ENCODE measurements at regions of chr12 and their contacts with region 1.

Region 1: DNA sequence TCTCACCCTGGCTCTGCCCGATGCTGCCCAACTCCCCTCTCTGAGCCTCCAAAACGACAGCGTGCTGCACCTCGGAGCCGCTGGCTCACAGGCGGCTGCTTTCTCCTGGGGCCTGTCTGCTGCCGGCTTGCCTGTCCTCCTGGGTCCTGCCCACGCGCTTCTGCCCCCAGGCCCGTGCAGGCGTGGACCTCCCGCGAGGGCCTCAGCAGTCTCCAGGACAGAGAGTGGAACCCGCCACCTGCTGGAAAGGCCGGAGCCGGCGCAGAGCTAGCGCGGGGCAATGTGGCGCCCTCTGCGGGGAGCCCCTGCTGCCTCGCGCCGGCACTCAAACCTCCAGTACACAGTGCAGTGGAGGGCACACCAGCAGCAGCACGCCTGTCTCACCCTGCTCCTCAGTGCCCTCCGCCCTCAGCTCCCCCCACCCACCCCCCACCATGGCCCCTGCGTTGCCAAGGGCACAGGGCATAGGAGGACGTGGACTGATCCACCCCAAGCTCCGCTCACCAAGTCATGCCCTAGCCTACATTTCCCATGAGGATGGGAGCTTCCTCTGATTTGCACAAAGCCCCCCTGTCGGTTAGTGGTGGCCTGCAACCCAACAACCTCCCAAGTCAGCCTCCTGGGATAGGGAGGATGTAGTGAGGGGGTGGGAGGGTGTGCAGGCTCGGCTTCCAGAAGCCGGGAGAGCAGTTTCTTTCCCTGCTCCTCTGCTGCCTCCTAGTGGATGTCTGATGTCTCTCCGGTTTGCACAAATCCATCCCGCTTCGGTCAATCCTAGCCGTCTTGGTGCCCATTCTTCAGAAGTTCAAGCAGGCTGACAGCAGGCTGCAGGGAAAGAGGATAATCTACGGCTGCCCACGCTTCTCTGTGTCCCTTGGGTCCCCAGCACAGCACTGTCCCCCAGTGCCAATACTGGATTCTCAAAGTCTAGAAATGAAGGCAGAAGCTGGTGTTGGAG is 25.2 kb downstream of the KRT8 start:
- DNase-seq: peak; percentile 78 to 84 (median 81)
- ATAC-seq: peak; percentile 92 to 94 (median 92)
- H3K4me3 ChIP-seq: peak overlapping the region in 2 of 3 donors; percentile 26 to 40
- H3K27ac ChIP-seq: no peak overlapping the region
- H3K4me1 ChIP-seq: peaks cover 0 to 14% (median 0%) of the 10 kb centered on the region in 4 donors
- H3K27me3 ChIP-seq: no peaks in the 10 kb centered on the region
- CTCF ChIP-seq: peak; percentile 57 to 84 (median 60)
- POLR2A ChIP-seq: no peak

Region 2: DNA sequence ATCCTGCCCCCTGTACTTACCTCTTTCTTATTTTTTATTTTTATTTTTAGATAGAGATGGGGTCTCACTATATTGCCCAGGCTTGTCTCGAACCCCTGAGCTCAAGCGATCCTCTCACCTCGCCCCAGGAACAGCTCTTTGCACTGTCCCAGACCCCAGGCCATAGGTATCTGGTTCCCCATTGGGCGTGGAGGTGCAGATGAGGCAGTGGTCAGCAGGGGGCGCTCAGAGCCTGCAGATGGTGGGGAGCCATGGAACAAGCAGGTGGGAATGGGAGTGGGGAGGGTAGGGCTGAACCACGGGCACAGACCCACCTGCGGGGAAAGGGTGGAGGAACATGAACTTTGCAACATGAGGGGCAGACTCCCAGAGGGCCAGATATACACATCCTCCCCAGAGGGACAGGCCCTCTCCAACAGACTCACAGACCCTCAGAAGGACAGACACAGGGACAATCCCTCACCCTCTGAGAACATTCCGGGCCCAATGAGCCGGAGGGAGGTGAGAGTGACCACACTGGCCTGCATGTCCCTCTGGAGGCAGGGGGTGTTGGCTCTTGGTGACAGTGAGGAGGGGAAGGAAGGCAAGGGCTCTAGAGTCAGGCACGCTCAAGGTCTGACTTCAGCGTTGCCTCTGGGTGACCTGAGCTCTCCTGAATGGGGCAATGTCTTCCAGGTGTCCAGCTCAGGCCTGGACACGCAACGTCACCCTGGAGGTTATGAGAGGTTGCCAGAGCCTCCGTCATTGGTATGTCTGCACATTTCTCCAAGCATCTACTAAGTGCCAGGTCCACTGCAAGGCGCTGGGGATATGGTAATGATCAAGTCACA is 722.7 kb before region 1 on chr12:
- intact Hi-C with region 1: loop called (anchors 5 to 10 kb)
- DNase-seq: peak; percentile 74 to 80 (median 78)
- ATAC-seq: peak; percentile 72 to 84 (median 78)
- H3K4me3 ChIP-seq: no peak overlapping the region
- H3K27ac ChIP-seq: no peak overlapping the region
- H3K4me1 ChIP-seq: no peaks in the 10 kb centered on the region
- H3K27me3 ChIP-seq: no peaks in the 10 kb centered on the region
- CTCF ChIP-seq: peak; percentile 86 to 93 (median 90)
- POLR2A ChIP-seq: no peak

Region 3: DNA sequence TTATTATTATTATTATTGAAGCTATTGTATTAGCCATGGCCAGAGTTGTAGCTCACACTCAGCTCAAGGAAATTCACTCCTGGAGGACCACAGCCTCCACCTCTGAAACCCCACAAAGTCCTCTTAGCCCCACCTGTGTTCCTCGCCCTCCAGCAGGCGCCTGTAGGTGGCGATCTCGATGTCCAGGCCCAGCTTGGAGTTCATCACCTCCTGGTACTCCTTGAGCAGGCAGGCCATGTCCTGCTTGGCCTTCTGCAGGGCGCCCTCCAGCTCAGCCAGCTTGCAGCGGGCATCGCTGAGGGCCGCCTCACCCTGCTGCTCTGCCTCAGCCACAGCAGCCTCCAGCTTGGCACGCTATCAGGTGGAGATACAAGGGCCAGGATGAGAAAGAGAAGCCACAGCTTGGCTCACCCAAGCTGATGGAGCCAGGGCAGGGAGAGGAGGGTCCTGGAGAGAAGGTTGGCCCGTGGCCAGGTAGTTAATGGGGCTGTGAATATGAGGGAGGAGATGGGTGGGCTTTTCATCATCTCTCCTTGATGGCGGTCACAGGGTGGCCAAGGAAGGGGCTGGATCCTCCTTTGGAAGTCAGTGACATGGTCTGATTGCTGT is 517.5 kb before region 1 on chr12:
- intact Hi-C with region 1: loop called in 1 of 2 experiments (anchors 10 kb)
- DNase-seq: no peak
- ATAC-seq: no peak
- H3K4me3 ChIP-seq: no peak overlapping the region
- H3K27ac ChIP-seq: no peak overlapping the region
- H3K4me1 ChIP-seq: peaks cover 0 to 8% (median 0%) of the 10 kb centered on the region in 4 donors
- H3K27me3 ChIP-seq: no peaks in the 10 kb centered on the region
- CTCF ChIP-seq: peak in 1 of 4 donors; percentile 12
- POLR2A ChIP-seq: no peak

Region 4: GRCh38 chr12:52372216-52373154 is 507.2 kb before region 1 on chr12:
- intact Hi-C with region 1: loop called (anchors 10 kb)
- DNase-seq: peak; percentile 78 to 86 (median 82)
- ATAC-seq: peak; percentile 94 to 99 (median 97)
- H3K4me3 ChIP-seq: no peak overlapping the region
- H3K27ac ChIP-seq: no peak overlapping the region
- H3K4me1 ChIP-seq: no peaks in the 10 kb centered on the region
- H3K27me3 ChIP-seq: no peaks in the 10 kb centered on the region
- CTCF ChIP-seq: peak; percentile 78 to 87 (median 82)
- POLR2A ChIP-seq: no peak

Region 5: DNA sequence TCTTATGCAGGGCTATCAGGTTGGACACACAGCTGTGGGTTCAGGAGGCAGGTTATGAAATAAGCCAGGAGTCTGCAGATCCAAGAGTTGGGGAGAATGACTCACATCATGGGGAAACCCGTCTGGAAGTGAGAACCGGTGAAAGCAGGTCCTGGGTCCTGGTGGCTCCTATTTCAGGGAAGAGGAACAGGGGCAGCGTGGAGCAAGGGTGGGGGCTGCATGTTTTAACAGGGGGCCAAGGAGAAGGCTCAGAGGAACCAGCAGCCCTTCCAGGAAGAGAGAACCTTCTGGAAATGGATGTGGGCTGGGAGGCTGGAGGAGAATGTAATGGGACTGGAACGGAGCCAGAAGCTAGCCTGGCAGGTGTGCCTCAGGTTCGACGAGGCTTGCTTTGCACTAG is 298.2 kb before region 1 on chr12:
- intact Hi-C with region 1: loop called (anchors 2 to 5 kb)
- DNase-seq: peak in 1 of 3 donors; percentile 23
- ATAC-seq: no peak
- H3K4me3 ChIP-seq: no peak overlapping the region
- H3K27ac ChIP-seq: no peak overlapping the region
- H3K4me1 ChIP-seq: no peaks in the 10 kb centered on the region
- H3K27me3 ChIP-seq: no peaks in the 10 kb centered on the region
- CTCF ChIP-seq: no peak
- POLR2A ChIP-seq: no peak